ENCODE measurements at regions of chr5 and their contacts with region 1.

Region 1: GRCh38 chr5:43105369-43106289 is 15.1 kb upstream of the ZNF131 start:
- DNase-seq: peak; percentile 93
- ATAC-seq: peak; percentile 98
- H3K4me3 Mint-ChIP-seq: peak overlapping the region; percentile 74
- H3K27ac Mint-ChIP-seq: peak overlapping the region; percentile 87
- H3K4me1 Mint-ChIP-seq: peaks cover 45% of the 10 kb centered on the region
- H3K27me3 Mint-ChIP-seq: no peaks in the 10 kb centered on the region

Region 2: GRCh38 chr5:43066799-43067741 is 38.6 kb before region 1 on chr5:
- CTCF ChIA-PET with region 1: interaction called, 26 read pairs
- POLR2A ChIA-PET with region 1: interaction called, 7 read pairs
- DNase-seq: peak; percentile 91
- ATAC-seq: peak; percentile 59
- H3K4me3 Mint-ChIP-seq: peak overlapping the region; percentile 94
- H3K27ac Mint-ChIP-seq: peak overlapping the region; percentile 99
- H3K4me1 Mint-ChIP-seq: peaks cover 43% of the 10 kb centered on the region
- H3K27me3 Mint-ChIP-seq: no peaks in the 10 kb centered on the region

Region 3: GRCh38 chr5:43140286-43140685 is 34.7 kb after region 1 on chr5:
- CTCF ChIA-PET with region 1: interaction called, 21 read pairs
- POLR2A ChIA-PET with region 1: no interaction called
- DNase-seq: no peak
- ATAC-seq: peak; percentile 36
- H3K4me3 Mint-ChIP-seq: no peak overlapping the region
- H3K27ac Mint-ChIP-seq: no peak overlapping the region
- H3K4me1 Mint-ChIP-seq: peaks cover 32% of the 10 kb centered on the region
- H3K27me3 Mint-ChIP-seq: no peaks in the 10 kb centered on the region

Region 4: GRCh38 chr5:43305948-43306565 is 200.4 kb after region 1 on chr5:
- CTCF ChIA-PET with region 1: interaction called, 43 read pairs
- POLR2A ChIA-PET with region 1: no interaction called
- DNase-seq: no peak
- ATAC-seq: peak; percentile 34
- H3K4me3 Mint-ChIP-seq: no peak overlapping the region
- H3K27ac Mint-ChIP-seq: peak overlapping the region; percentile 39
- H3K4me1 Mint-ChIP-seq: peaks cover 80% of the 10 kb centered on the region
- H3K27me3 Mint-ChIP-seq: no peaks in the 10 kb centered on the region

Region 5: GRCh38 chr5:43389679-43390329 is 284.2 kb after region 1 on chr5:
- CTCF ChIA-PET with region 1: interaction called, 37 read pairs
- POLR2A ChIA-PET with region 1: no interaction called
- DNase-seq: peak; percentile 65
- ATAC-seq: peak; percentile 84
- H3K4me3 Mint-ChIP-seq: no peak overlapping the region
- H3K27ac Mint-ChIP-seq: peak overlapping the region; percentile 28
- H3K4me1 Mint-ChIP-seq: peaks cover 11% of the 10 kb centered on the region
- H3K27me3 Mint-ChIP-seq: no peaks in the 10 kb centered on the region

Measured in activated CD8-positive, alpha-beta T cell treated with anti-CD3 and anti-CD28 coated beads, Interleukin-2, amount 10 ng/mL, durations not matched to agents 7 days and 5 days (primary cell).